ENCODE measurements at regions of chr19 and their contacts with region 1.

Region 1: DNA sequence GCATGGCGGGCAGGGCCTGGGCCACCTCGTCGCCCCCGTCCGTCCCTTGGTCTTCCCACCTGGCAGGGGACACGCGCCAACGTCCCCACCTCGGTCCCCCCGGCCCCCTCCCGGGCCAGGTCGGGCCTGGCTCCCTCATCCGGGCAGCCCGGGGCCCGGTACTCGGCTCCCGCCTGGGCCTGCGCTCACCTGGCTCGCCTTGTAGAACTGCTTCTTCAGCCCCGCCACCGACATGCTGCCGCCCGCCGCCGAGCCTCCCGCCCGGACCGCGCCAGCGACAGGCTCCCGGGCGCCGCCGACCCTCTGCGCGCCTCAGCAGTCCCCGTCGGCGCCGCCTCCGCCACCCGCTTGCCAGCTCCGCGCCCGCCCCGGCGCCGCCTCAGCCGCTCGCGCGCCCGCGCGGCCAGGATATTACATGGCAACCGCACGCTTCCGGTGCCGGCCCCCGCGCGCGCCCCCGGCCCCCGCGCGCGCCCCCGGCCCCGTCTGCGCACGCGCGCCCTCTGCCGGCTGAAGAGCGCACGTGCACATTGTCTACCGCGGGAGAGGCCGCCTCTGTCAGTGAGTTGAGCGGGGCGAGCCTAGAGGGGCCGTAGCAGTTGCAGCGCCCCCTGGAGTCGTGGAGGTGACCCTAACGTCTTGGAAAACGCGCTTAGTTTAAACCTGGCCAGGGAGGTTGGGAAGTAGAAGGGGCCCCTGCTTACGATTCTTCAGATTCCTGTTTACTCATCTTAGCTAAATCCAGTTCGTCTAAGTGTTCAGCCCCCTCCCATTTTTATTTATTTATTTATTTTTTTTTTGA is at the start of gene SH3GL1:
- DNase-seq: peak; percentile 88 to 92
- ATAC-seq: peak; percentile 67 to 79 (median 72)
- H3K4me3 ChIP-seq: peak within 1 kb of the TSS; percentile 84
- H3K27ac ChIP-seq: peak within 1 kb of the TSS; percentile 96
- H3K4me1 ChIP-seq: peaks cover 40% of the 10 kb centered on the region
- H3K27me3 ChIP-seq: no peaks in the 10 kb centered on the region
- CTCF ChIP-seq: peak; percentile 97
- total RNA-seq, gene SH3GL1: 16.0 to 26.6 (median 21.6) TPM

Region 2: GRCh38 chr19:4369888-4370260 is 30.5 kb before region 1 on chr19:
- intact Hi-C with region 1: loop called in 1 of 2 experiments (anchors 2 kb)
- DNase-seq: peak; percentile 42 to 78
- ATAC-seq: peak in 3 of 4 donors; percentile 39 to 59 (median 53)
- H3K4me3 ChIP-seq: peak overlapping the region; percentile 43
- H3K27ac ChIP-seq: peak overlapping the region; percentile 85
- H3K4me1 ChIP-seq: peaks cover 75% of the 10 kb centered on the region
- H3K27me3 ChIP-seq: no peaks in the 10 kb centered on the region
- CTCF ChIP-seq: peak; percentile 58

Region 3: GRCh38 chr19:4457654-4458395 is 57.5 kb after region 1 on chr19 and contains the start of gene UBXN6:
- intact Hi-C with region 1: loop called (anchors 5 kb)
- DNase-seq: peak; percentile 99
- ATAC-seq: peak; percentile 86 to 92 (median 89)
- H3K4me3 ChIP-seq: peak within 1 kb of the TSS; percentile 74
- H3K27ac ChIP-seq: peak within 1 kb of the TSS; percentile 84
- H3K4me1 ChIP-seq: peaks cover 29% of the 10 kb centered on the region
- H3K27me3 ChIP-seq: no peaks in the 10 kb centered on the region
- CTCF ChIP-seq: peak; percentile 9
- total RNA-seq, gene UBXN6: 120 to 170 (median 132) TPM

Measured in psoas muscle (tissue), 8 donors.